HepG2 (cell line): ENCODE measurements at regions of chr10 and their contacts with region 1.

Region 1: GRCh38 chr10:99732033-99732912 is at the starts of genes COX15 and CUTC:
- DNase-seq: peak; percentile 94
- ATAC-seq: peak; percentile 93
- H3K4me3 ChIP-seq: peak within 1 kb of the TSS; percentile 80 to 87 (median 81)
- H3K27ac ChIP-seq: peak within 1 kb of the TSS; percentile 97
- H3K4me1 ChIP-seq: peaks cover 39% of the 10 kb centered on the region
- H3K27me3 ChIP-seq: no peaks in the 10 kb centered on the region; a peak in 1 of 5 replicates
- CTCF ChIP-seq: peak; percentile 75
- EP300 ChIP-seq: no peak
- POLR2A ChIP-seq: peak; percentile 85 to 88
- RAD21 ChIP-seq: peak; percentile 79
- total RNA-seq, gene COX15: 44.7 and 59.4 TPM in 2 replicates
- total RNA-seq, gene CUTC: 25.8 and 36.5 TPM in 2 replicates

Region 2: GRCh38 chr10:99659031-99659867 is 73.0 kb before region 1 on chr10 and contains the start of gene ENTPD7:
- CTCF ChIA-PET with region 1: no interaction called
- POLR2A ChIA-PET with region 1: interaction called, 12 read pairs
- in situ Hi-C with region 1: no loop called
- intact Hi-C with region 1: no loop called
- DNase-seq: peak; percentile 93
- ATAC-seq: peak; percentile 98
- H3K4me3 ChIP-seq: peak within 1 kb of the TSS; percentile 93 to 95 (median 93)
- H3K27ac ChIP-seq: peak within 1 kb of the TSS; percentile 81
- H3K4me1 ChIP-seq: peaks cover 49% of the 10 kb centered on the region
- H3K27me3 ChIP-seq: no peaks in the 10 kb centered on the region; a peak in 1 of 5 replicates
- CTCF ChIP-seq: peak; percentile 33
- EP300 ChIP-seq: no peak
- POLR2A ChIP-seq: peak; percentile 86 to 89
- RAD21 ChIP-seq: peak; percentile 27
- total RNA-seq, gene ENTPD7: 35.5 and 36.5 TPM in 2 replicates

Region 3: DNA sequence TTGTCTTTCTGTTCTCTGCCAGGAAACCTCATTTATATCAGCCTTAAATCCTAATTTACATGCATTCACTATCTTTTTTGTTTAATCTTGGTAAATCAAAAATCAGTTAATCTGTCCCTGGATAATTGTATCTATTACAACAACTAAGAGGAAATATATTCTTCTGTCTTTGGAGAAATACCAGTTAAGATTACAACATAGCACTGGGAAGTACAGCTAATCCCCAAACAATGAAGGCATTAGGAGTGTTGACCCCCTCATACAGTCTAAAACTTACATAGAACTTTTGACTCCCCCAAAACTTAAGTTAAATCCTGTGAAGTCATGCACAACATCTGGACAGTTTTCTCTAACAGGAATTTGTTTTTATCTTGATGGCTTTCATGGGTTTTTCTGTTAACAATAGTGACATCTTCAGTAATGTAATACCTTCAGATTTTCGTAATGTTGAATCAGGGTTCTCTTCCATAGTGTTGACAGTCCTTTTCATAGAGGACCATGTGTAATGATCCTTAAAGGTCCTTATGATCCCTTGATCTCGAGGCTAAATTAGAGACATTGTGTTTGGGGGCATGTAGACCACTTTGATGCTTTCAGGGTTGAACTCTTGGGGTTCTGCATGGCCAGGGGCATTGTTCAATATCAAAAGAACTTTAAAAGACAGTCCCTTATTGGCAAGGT is 26.1 kb after region 1 on chr10:
- CTCF ChIA-PET with region 1: no interaction called
- POLR2A ChIA-PET with region 1: interaction called, 20 read pairs
- in situ Hi-C with region 1: no loop called
- intact Hi-C with region 1: loop called (anchors 2 kb)
- DNase-seq: no peak
- ATAC-seq: no peak
- H3K4me3 ChIP-seq: no peak overlapping the region
- H3K27ac ChIP-seq: no peak overlapping the region
- H3K4me1 ChIP-seq: peaks cover 60% of the 10 kb centered on the region
- H3K27me3 ChIP-seq: no peaks in the 10 kb centered on the region
- CTCF ChIP-seq: no peak
- EP300 ChIP-seq: no peak
- POLR2A ChIP-seq: no peak
- RAD21 ChIP-seq: no peak

Region 4: DNA sequence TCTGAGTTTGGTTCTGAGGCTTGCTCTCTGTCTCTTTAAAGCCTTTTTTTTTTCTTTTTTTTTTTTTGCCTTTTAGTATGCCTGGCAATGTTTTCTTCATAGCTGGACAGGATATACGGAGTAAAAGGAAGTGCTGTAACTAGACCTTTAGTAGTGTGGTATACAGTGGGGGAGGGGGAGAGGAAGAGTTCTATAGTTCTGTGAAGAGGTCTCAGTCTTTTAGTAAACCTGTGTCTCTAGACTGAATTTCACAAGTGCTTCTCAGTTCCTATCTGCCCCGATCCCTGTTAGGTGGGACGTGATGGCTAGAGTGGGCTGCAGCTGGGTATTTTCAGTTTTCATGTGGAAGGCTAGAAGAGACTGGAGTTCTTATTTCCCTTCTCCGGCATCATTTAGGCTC is 47.1 kb after region 1 on chr10:
- CTCF ChIA-PET with region 1: no interaction called
- POLR2A ChIA-PET with region 1: interaction called, 73 read pairs
- in situ Hi-C with region 1: loop called (anchors 5 kb)
- intact Hi-C with region 1: loop called (anchors 1 kb)
- DNase-seq: peak; percentile 76
- ATAC-seq: peak; percentile 27
- H3K4me3 ChIP-seq: peak overlapping the region; percentile 10 to 61 (median 43); a peak in 4 of 6 replicates
- H3K27ac ChIP-seq: peak overlapping the region; percentile 95
- H3K4me1 ChIP-seq: peaks cover 71% of the 10 kb centered on the region
- H3K27me3 ChIP-seq: no peaks in the 10 kb centered on the region; a peak in 1 of 5 replicates
- CTCF ChIP-seq: no peak
- EP300 ChIP-seq: no peak; a peak in 1 of 4 replicates
- POLR2A ChIP-seq: no peak
- RAD21 ChIP-seq: no peak

Region 5: GRCh38 chr10:99788598-99789256 is 56.5 kb after region 1 on chr10:
- CTCF ChIA-PET with region 1: no interaction called
- POLR2A ChIA-PET with region 1: interaction called, 26 read pairs
- in situ Hi-C with region 1: loop called (anchors 5 kb)
- intact Hi-C with region 1: no loop called
- DNase-seq: no peak
- ATAC-seq: no peak
- H3K4me3 ChIP-seq: peak overlapping the region; percentile 19 to 35 (median 33); a peak in 4 of 6 replicates
- H3K27ac ChIP-seq: peak overlapping the region; percentile 2
- H3K4me1 ChIP-seq: peaks cover 63% of the 10 kb centered on the region
- H3K27me3 ChIP-seq: no peaks in the 10 kb centered on the region; a peak in 1 of 5 replicates
- CTCF ChIP-seq: no peak
- EP300 ChIP-seq: no peak
- POLR2A ChIP-seq: no peak
- RAD21 ChIP-seq: no peak

Region 6: DNA sequence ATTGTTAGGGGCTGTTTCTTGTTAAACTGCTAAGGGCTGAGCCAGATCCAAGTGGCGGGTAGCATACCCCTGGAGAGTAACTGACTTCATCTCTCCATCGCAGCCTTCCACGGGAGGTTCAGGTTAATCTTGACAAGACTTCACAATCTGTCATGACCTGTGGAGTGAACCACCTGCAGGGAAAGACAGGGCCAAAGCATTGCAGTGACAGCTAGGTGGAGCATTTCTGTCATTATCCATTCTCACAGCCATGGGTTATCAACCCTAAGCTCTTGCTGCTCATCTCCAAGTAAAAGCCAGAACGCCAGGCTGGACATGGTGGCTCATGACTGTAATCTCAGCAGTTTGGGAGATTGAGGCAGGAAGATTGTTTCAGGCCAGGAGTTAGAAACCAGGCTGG is 67.3 kb after region 1 on chr10:
- CTCF ChIA-PET with region 1: no interaction called
- POLR2A ChIA-PET with region 1: interaction called, 20 read pairs
- in situ Hi-C with region 1: no loop called
- intact Hi-C with region 1: no loop called
- DNase-seq: no peak
- ATAC-seq: peak; percentile 20; the same call in 1 of the 3 replicates
- H3K4me3 ChIP-seq: no peak overlapping the region
- H3K27ac ChIP-seq: no peak overlapping the region
- H3K4me1 ChIP-seq: no peaks in the 10 kb centered on the region
- H3K27me3 ChIP-seq: no peaks in the 10 kb centered on the region
- CTCF ChIP-seq: 0 out of 2 replicates have a peak, but pooled peaks have one; percentile 7
- EP300 ChIP-seq: no peak
- POLR2A ChIP-seq: no peak
- RAD21 ChIP-seq: no peak